ENCODE measurements at regions of chr6 and their contacts with region 1.

Region 1: GRCh38 chr6:139375232-139376016 is 976 bp upstream of the CITED2 start:
- DNase-seq: peak; percentile 71 to 91
- H3K4me3 ChIP-seq: peak overlapping the region; percentile 79 to 96 (median 95)
- H3K27ac ChIP-seq: peak overlapping the region; percentile 92
- H3K4me1 ChIP-seq: peaks cover 7 to 14% (median 8%) of the 10 kb centered on the region in 4 experiments; a peak in 6 of 7 replicates
- H3K27me3 ChIP-seq: 0 out of 7 replicates have a peak, but pooled peaks cover 0 to 3% (median 0%) of the 10 kb centered on the region in 4 experiments
- CTCF ChIP-seq: no peak
- EP300 ChIP-seq: peak in 1 of 2 experiments; percentile 52; a peak in 1 of 3 replicates
- POLR2A ChIP-seq: peak; percentile 65 to 80; a peak in 2 of 3 replicates
- RAD21 ChIP-seq: peak; percentile 31 to 56; a peak in 3 of 4 replicates

Region 2: DNA sequence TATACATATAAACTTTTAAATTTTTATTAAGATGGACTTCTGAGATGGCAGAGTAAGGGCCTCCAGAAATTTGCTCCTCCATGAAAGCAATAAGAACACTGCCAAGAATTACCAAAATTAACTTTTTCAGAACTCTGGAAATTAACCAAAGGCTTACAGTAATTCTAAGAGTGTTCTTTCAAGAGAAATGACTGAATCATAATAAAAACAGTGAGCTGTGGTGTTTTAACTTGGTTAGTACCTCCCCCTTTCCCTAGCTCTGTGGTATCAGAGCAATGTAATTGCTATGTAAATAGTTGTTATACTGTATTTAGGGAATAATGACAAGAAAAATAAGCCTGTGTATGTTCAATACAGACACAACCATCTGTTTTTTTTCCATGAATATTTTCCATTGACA is 221.6 kb before region 1 on chr6:
- CTCF ChIA-PET with region 1: no interaction called
- POLR2A ChIA-PET with region 1: no interaction called
- DNase-seq: no peak
- H3K4me3 ChIP-seq: no peak overlapping the region
- H3K27ac ChIP-seq: no peak overlapping the region
- H3K4me1 ChIP-seq: peaks cover 0 to 4% (median 0%) of the 10 kb centered on the region in 4 experiments; a peak in 2 of 7 replicates
- H3K27me3 ChIP-seq: no peaks in the 10 kb centered on the region
- CTCF ChIP-seq: no peak
- EP300 ChIP-seq: no peak
- POLR2A ChIP-seq: no peak
- RAD21 ChIP-seq: no peak

Region 3: DNA sequence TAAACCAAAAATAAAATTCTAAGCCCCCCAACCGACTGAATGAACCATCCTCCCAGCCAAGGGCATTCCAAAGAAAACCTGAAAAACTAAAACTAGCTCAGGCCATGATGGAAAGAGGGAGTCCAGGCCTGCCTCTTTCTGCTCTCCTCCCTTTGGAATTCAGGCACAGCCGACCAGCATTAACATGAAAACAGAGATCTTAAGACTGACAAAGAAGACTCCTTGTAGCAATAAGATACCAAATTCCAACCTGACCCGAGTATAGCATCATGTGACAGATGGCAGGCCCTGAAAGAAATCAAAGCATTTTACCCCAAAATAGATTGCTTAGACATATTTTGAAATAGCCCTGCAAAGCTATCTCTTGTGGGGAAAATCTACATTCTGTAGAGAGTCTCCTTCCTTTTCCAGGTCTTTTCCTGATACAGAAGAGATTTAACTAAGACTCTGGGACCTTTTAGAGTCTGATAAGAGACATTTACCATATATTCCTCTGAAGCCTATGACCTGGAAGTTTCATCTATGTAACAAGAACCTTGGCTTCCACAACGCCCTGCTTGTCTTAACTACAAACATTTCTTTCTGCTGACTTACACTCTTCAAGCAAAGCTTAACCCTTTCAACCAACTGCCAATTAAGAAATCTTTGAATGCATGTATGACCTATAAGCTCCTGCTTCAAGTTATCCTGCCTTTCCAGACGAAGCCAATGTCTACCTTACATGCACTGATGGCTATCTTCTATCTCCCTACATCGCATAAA is 61.5 kb before region 1 on chr6:
- CTCF ChIA-PET with region 1: interaction called, 3 read pairs
- POLR2A ChIA-PET with region 1: interaction called, 14 read pairs
- DNase-seq: peak in 1 of 2 experiments; percentile 63
- H3K4me3 ChIP-seq: peak overlapping the region in 1 of 4 experiments; percentile 14; a peak in 1 of 8 replicates
- H3K27ac ChIP-seq: peak overlapping the region; percentile 82
- H3K4me1 ChIP-seq: peaks cover 3 to 28% (median 16%) of the 10 kb centered on the region in 4 experiments; a peak in 5 of 7 replicates
- H3K27me3 ChIP-seq: no peaks in the 10 kb centered on the region
- CTCF ChIP-seq: no peak
- EP300 ChIP-seq: 0 out of 3 replicates have a peak, but pooled peaks of 1 of the 2 experiments have one; percentile 59
- POLR2A ChIP-seq: no peak
- RAD21 ChIP-seq: no peak; a peak in 1 of 4 replicates

Region 4: DNA sequence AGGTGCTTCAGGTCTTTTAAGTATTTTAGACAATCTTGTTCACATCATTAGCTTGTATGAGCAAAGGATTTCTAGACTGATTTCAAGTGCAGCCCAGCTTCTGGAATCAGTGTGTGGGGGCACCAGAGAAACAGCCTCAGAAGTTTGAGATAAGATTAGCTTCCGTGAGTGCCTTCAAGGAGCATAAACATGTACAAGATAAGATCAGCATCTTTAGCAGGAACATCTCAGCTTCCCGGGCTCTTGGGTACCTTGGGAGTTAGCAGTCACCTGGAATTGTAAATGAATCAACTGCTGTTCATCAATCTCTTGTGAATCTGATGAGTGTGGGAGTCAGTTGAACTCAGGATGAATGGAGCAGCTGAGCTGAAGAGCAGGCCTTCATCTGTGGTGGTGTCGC is 11.0 kb after region 1 on chr6:
- CTCF ChIA-PET with region 1: interaction called, 6 read pairs
- POLR2A ChIA-PET with region 1: interaction called, 24 read pairs
- DNase-seq: no peak
- H3K4me3 ChIP-seq: no peak overlapping the region
- H3K27ac ChIP-seq: no peak overlapping the region
- H3K4me1 ChIP-seq: no peaks in the 10 kb centered on the region
- H3K27me3 ChIP-seq: no peaks in the 10 kb centered on the region
- CTCF ChIP-seq: no peak
- EP300 ChIP-seq: no peak
- POLR2A ChIP-seq: no peak
- RAD21 ChIP-seq: no peak

Region 5: DNA sequence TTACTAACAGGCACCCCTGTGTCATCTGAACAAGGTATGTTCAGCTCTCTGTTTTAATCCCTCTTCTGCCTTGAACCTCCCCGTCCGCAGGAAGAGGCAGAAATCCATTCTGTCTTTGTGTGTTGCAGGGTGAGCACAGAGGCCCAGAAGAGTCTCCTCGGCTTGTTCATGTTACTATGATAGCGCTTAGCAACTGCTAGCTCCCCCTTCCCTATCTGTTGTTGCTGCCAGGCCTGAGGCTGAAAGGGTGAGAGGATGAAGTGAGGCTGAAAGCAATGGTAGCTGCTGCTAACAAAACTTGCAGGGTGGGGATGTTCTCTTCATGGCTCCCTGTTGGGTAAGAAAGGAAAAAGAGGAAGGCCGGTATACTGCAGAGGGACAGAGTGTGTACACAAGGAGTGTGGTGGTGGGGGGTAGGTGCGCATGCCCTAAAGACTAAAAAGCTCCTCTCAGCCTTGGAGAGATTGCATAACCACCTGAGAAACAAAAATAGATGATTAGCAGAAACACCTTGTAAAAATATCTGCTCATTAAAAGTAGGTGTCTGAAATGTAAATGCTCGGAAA is 54.2 kb after region 1 on chr6:
- CTCF ChIA-PET with region 1: no interaction called
- POLR2A ChIA-PET with region 1: interaction called, 10 read pairs
- DNase-seq: no peak
- H3K4me3 ChIP-seq: no peak overlapping the region
- H3K27ac ChIP-seq: no peak overlapping the region
- H3K4me1 ChIP-seq: peaks cover 0 to 3% (median 0%) of the 10 kb centered on the region in 4 experiments; a peak in 1 of 7 replicates
- H3K27me3 ChIP-seq: no peaks in the 10 kb centered on the region
- CTCF ChIP-seq: no peak
- EP300 ChIP-seq: no peak
- POLR2A ChIP-seq: no peak
- RAD21 ChIP-seq: no peak

Region 6: GRCh38 chr6:139482287-139482686 is 106.9 kb after region 1 on chr6:
- CTCF ChIA-PET with region 1: interaction called, 4 read pairs
- POLR2A ChIA-PET with region 1: interaction called, 33 read pairs
- DNase-seq: no peak
- H3K4me3 ChIP-seq: no peak overlapping the region
- H3K27ac ChIP-seq: no peak overlapping the region
- H3K4me1 ChIP-seq: peaks cover 3 to 21% (median 16%) of the 10 kb centered on the region in 4 experiments
- H3K27me3 ChIP-seq: no peaks in the 10 kb centered on the region
- CTCF ChIP-seq: no peak
- EP300 ChIP-seq: no peak
- POLR2A ChIP-seq: no peak
- RAD21 ChIP-seq: no peak

Region 7: GRCh38 chr6:139852488-139853140 is 477.2 kb after region 1 on chr6:
- CTCF ChIA-PET with region 1: no interaction called
- POLR2A ChIA-PET with region 1: interaction called, 11 read pairs
- DNase-seq: no peak
- H3K4me3 ChIP-seq: no peak overlapping the region
- H3K27ac ChIP-seq: no peak overlapping the region
- H3K4me1 ChIP-seq: no peaks in the 10 kb centered on the region; a peak in 1 of 7 replicates
- H3K27me3 ChIP-seq: peaks cover 0 to 1% (median 0%) of the 10 kb centered on the region in 4 experiments; a peak in 1 of 7 replicates
- CTCF ChIP-seq: no peak
- EP300 ChIP-seq: no peak
- POLR2A ChIP-seq: no peak
- RAD21 ChIP-seq: no peak

Region 8: GRCh38 chr6:139923964-139924475 is 548.6 kb after region 1 on chr6:
- CTCF ChIA-PET with region 1: no interaction called
- POLR2A ChIA-PET with region 1: interaction called, 10 read pairs
- DNase-seq: no peak
- H3K4me3 ChIP-seq: no peak overlapping the region
- H3K27ac ChIP-seq: no peak overlapping the region
- H3K4me1 ChIP-seq: peaks cover 0 to 3% (median 2%) of the 10 kb centered on the region in 4 experiments; a peak in 3 of 7 replicates
- H3K27me3 ChIP-seq: no peaks in the 10 kb centered on the region
- CTCF ChIP-seq: no peak
- EP300 ChIP-seq: no peak
- POLR2A ChIP-seq: no peak
- RAD21 ChIP-seq: no peak